Endothelial cell of umbilical vein (primary cell): ENCODE measurements at regions of chr11 and their contacts with region 1.

Region 1: DNA sequence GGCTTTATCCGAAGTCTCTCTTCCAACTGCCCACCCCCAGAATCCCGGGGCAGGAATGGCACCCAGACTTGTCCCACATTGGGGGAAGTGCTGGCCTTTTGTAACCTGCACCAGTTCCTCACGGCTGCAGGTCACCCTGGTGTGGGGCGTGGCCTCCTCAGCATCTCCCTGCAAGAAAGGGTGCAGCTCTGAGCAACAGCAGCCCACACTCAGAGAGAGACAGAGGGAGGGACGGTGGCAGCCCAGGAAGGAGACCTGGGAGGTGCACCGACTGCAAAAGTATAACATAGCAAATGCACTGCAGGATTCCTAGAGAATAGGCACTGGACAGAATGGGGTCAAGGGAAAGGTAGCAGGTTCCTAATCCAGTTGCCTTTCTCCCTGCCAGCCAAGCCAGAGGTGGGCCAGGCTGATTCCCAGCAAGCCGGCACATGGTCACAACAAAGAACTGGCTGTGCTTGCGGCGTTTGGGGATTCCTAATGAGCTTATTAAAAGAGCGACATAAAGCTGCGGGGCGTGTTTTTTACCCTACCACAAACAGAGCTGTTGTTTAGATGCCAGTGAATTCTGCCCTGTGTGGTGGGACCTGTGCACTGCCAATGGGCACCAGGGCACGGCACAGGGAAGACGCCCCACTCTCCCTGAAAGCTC is 18.2 kb upstream of the IGSF9B start:
- DNase-seq: no peak
- H3K4me3 ChIP-seq: no peak overlapping the region
- H3K27ac ChIP-seq: no peak overlapping the region
- H3K4me1 ChIP-seq: no peaks in the 10 kb centered on the region
- H3K27me3 ChIP-seq: no peaks in the 10 kb centered on the region
- CTCF ChIP-seq: no peak
- POLR2A ChIP-seq: no peak

Region 2: GRCh38 chr11:134008634-134009071 is 33.7 kb after region 1 on chr11:
- CTCF ChIA-PET with region 1: no interaction called
- POLR2A ChIA-PET with region 1: no interaction called
- dilution Hi-C with region 1: no loop called
- intact Hi-C with region 1: loop called (anchors 1 kb)
- DNase-seq: no peak
- H3K4me3 ChIP-seq: no peak overlapping the region
- H3K27ac ChIP-seq: no peak overlapping the region
- H3K4me1 ChIP-seq: no peaks in the 10 kb centered on the region
- H3K27me3 ChIP-seq: no peaks in the 10 kb centered on the region
- CTCF ChIP-seq: no peak
- POLR2A ChIP-seq: no peak